AG04450 (cell line): ENCODE measurements at regions of chr1 and their contacts with region 1.

Region 1: GRCh38 chr1:27300341-27301051 is 21.5 kb upstream of the TMEM222 start:
- DNase-seq: peak; percentile 93
- H3K4me3 ChIP-seq: peak overlapping the region; percentile 29; the same call in 1 of the 2 replicates
- H3K27ac ChIP-seq: peak overlapping the region; percentile 97
- H3K27me3 ChIP-seq: no peaks in the 10 kb centered on the region
- CTCF ChIP-seq: peak; percentile 96

Region 2: GRCh38 chr1:27102707-27103491 is 197.6 kb before region 1 on chr1:
- CTCF ChIA-PET with region 1: interaction called, 23 read pairs
- POLR2A ChIA-PET with region 1: interaction called, 8 read pairs
- DNase-seq: no peak
- H3K4me3 ChIP-seq: no peak overlapping the region
- H3K27ac ChIP-seq: no peak overlapping the region
- H3K27me3 ChIP-seq: no peaks in the 10 kb centered on the region
- CTCF ChIP-seq: peak; percentile 96

Region 3: GRCh38 chr1:27275696-27276095 is 24.8 kb before region 1 on chr1:
- CTCF ChIA-PET with region 1: interaction called, 12 read pairs
- POLR2A ChIA-PET with region 1: no interaction called
- DNase-seq: no peak
- H3K4me3 ChIP-seq: no peak overlapping the region
- H3K27ac ChIP-seq: no peak overlapping the region
- H3K27me3 ChIP-seq: no peaks in the 10 kb centered on the region
- CTCF ChIP-seq: no peak

Region 4: DNA sequence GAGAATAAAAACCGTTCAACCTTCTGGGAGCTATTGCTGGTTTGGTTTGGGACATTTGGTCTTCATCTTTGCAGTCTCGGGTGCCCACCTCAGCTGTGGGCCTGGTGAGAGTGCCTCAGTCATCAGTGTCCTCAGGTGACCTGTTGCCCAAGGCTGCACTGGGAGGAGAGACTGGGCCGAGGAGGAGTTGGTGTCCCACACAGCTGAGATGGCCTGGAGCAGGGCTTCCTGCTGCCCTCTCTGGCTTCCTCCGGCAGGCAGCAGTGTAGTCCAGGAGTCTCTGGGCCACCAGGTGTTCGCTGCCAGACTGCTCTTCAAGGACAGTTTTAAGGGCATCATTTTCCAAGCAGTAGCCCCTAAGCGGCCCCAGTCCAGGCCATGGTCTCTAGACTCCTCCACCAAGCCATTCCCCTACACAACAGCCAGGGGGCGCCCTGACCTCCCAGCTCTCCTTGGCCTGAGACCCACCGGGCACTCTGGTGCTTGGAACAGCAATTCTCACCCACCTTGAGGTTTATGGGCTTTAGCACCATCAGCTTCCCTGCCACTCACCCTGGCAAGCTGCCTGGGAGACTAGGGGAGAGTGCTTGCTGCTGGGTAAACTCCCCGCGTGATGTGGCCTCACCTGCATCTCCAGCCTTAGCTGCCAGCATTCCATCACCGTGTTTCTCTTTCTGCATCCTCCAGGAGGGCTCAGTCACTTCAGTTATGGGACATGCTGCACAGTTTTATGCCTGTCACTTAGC is 32.2 kb after region 1 on chr1:
- CTCF ChIA-PET with region 1: interaction called, 14 read pairs
- POLR2A ChIA-PET with region 1: no interaction called
- DNase-seq: no peak
- H3K4me3 ChIP-seq: no peak overlapping the region
- H3K27ac ChIP-seq: no peak overlapping the region
- H3K27me3 ChIP-seq: no peaks in the 10 kb centered on the region
- CTCF ChIP-seq: peak; percentile 81

Region 5: GRCh38 chr1:27392096-27392777 is 91.7 kb after region 1 on chr1 and contains the start of gene GPR3:
- CTCF ChIA-PET with region 1: interaction called, 168 read pairs
- POLR2A ChIA-PET with region 1: interaction called, 7 read pairs
- DNase-seq: peak; percentile 78
- H3K4me3 ChIP-seq: peak within 1 kb of the TSS; percentile 77
- H3K27ac ChIP-seq: peak within 1 kb of the TSS; percentile 21
- H3K27me3 ChIP-seq: no peaks in the 10 kb centered on the region
- CTCF ChIP-seq: peak; percentile 61
- polyA plus RNA-seq, gene GPR3: 1.3 and 1.7 TPM in 2 replicates

Region 6: DNA sequence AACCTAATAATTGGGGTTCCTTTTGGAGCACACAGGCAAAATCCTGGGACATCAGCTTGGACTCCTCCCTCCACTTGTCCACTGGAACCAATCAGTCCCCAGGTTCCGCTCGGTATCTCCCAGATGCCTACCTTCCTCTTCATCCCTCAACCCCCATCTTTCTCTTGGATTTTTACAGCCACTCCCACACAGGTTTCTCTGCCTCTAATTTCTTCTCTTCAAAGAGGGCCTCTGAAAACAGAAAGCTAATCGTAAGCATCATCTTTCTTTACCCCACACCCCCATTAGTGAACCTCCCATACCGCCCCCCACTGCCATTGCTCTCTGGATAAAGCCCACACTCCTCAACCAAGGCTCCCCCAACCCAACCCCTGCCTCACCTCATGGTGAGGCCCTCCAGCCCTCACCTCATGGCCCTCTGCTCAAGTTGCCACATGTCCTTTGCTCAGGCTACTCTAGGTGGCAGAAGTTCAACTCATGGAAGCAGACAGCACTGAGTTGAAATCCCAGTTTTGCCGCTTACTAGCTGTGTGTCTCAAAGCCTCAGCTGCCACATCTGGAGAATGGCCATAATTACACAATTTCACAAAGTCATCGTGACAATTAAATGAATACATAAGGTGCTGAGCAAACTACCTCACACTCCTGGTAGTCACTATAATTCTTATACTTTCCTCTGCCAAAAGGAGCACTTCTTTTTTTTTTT is 207.6 kb after region 1 on chr1:
- CTCF ChIA-PET with region 1: no interaction called
- POLR2A ChIA-PET with region 1: no interaction called
- DNase-seq: no peak
- H3K4me3 ChIP-seq: no peak overlapping the region
- H3K27ac ChIP-seq: peak overlapping the region; percentile 21
- H3K27me3 ChIP-seq: no peaks in the 10 kb centered on the region
- CTCF ChIP-seq: no peak; the same call in 1 of the 2 replicates

Region 7: GRCh38 chr1:27662707-27663393 is 362.4 kb after region 1 on chr1:
- CTCF ChIA-PET with region 1: interaction called, 17 read pairs
- POLR2A ChIA-PET with region 1: no interaction called
- DNase-seq: no peak
- H3K4me3 ChIP-seq: no peak overlapping the region
- H3K27ac ChIP-seq: peak overlapping the region; percentile 21
- H3K27me3 ChIP-seq: no peaks in the 10 kb centered on the region
- CTCF ChIP-seq: peak; percentile 87